ENCODE measurements at regions of chr21 and their contacts with region 1.

Region 1: GRCh38 chr21:37758982-37759381 is 157.3 kb downstream of the KCNJ6 start:
- DNase-seq: no peak
- H3K4me3 ChIP-seq: no peak overlapping the region
- CTCF ChIP-seq: peak; percentile 94

Region 2: DNA sequence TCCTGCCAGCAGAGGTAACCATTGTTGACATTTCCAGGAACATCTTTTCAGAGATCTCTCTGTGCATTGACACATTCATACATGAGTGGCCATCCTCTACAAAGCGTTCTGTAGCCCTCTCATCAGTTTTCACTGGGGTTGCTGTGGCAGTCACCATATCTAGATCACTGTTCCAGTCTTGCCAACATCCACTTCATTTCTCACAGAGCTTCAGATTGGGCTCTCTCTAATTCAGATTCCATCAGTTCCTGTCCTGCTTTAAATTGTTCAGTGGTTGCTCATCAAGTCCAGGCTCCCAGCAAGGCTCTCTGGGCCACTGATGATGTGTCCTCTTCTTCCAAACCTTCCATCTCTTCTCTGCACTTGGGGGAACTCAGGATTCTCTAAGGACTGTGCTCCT is 16.4 kb before region 1 on chr21:
- CTCF ChIA-PET with region 1: interaction called, 13 read pairs
- POLR2A ChIA-PET with region 1: no interaction called
- DNase-seq: no peak
- H3K4me3 ChIP-seq: no peak overlapping the region
- CTCF ChIP-seq: no peak

Region 3: DNA sequence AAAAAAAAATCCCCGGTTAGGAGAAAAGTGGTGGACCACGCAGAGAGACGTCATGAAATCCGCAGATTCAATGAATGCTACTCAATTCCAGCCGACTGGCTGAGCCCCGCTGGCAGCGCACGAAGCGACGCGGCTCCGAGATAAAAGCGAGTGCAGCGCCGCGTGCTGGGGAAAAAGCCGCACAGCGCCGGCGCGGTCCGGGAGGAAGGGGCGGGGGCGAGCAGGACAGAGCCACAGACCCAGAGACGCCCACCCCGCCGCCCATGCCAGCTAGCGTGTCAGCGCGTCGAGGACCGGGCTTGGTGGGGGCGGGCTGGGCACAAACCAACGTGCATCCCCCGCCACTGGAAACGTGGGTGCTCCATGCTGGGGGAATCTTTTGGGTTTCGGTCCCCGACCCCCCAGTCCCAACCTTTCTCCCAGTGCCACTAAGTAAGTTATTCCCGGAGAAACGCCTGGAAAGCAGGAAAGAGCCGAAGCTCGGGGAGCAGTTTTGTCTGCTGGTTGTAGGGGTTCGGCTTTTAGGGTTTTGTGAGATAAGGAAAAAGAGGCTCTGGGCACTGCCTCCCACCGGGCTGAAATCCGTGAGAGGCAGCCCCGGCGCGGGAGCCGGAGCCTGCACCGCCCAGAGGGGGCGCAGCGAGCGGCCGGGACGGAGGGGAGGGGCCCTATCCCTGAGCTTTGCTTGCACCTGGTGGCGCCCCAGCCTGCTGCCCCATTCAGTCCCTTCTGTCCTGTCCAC is 157.5 kb after region 1 on chr21 and contains the start of gene KCNJ6:
- CTCF ChIA-PET with region 1: interaction called, 69 read pairs
- POLR2A ChIA-PET with region 1: no interaction called
- DNase-seq: no peak
- H3K4me3 ChIP-seq: peak within 1 kb of the TSS; percentile 32
- CTCF ChIP-seq: peak; percentile 89